ENCODE measurements at regions of chr4 and their contacts with region 1.

Region 1: DNA sequence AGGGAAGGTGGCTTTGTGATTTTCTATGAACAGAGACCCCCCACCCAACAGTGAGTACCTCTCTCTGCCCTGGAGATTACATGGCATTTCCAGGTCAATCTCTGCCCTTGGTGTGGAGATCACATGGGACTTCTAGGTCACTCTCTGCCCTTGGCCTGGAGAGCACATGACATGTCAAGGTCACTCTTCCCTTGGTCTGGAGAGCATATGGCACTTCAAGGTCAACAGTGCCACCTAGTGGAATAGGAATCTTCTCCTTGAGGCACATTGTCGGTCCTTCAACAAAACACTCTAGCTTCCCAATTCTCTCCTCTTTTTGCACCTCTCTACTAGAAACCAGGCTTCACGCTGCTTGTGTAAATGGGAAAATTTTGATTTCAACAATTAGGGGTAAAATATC is 66.2 kb upstream of the TACR3 start:
- DNase-seq: peak; percentile 17
- ATAC-seq: peak; percentile 96
- H3K4me3 ChIP-seq: no peak overlapping the region
- H3K27ac ChIP-seq: no peak overlapping the region
- H3K4me1 ChIP-seq: no peaks in the 10 kb centered on the region
- H3K27me3 ChIP-seq: no peaks in the 10 kb centered on the region; a peak in 1 of 4 replicates
- CTCF ChIP-seq: peak; percentile 54 to 68 (median 62); a peak in 5 of 6 replicates
- EP300 ChIP-seq: no peak
- POLR2A ChIP-seq: no peak
- RAD21 ChIP-seq: peak; percentile 87

Region 2: DNA sequence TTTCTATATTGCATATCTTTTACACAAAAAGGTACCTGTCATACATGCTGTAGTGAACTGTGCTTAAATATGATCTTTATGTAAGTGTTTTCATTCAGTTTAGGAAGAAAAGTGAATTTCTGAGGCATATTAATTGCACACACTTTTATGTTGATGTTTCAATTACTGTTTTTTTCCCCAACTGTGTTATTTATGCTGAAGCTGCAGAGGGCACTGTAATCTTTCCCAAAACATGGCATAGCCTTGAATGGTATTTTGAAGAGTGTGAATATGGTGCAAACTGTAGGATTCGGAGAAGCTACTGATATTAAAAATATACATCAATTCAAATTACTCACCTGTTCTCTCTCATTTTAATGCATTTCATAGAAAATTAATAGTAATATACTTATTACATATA is 581.9 kb before region 1 on chr4:
- CTCF ChIA-PET with region 1: interaction called, 5 read pairs
- POLR2A ChIA-PET with region 1: no interaction called
- RAD21 ChIA-PET with region 1: no interaction called
- SMC1A ChIA-PET with region 1: interaction called, 3 read pairs
- in situ Hi-C with region 1: no loop called
- intact Hi-C with region 1: loop called (anchors 1 kb)
- DNase-seq: no peak
- ATAC-seq: 0 out of 3 replicates have a peak, but pooled peaks have one; percentile 21
- H3K4me3 ChIP-seq: no peak overlapping the region
- H3K27ac ChIP-seq: no peak overlapping the region
- H3K4me1 ChIP-seq: no peaks in the 10 kb centered on the region
- H3K27me3 ChIP-seq: no peaks in the 10 kb centered on the region
- CTCF ChIP-seq: peak; percentile 6 to 41 (median 18); a peak in 3 of 6 replicates
- EP300 ChIP-seq: no peak
- POLR2A ChIP-seq: no peak
- RAD21 ChIP-seq: peak; percentile 45

Region 3: DNA sequence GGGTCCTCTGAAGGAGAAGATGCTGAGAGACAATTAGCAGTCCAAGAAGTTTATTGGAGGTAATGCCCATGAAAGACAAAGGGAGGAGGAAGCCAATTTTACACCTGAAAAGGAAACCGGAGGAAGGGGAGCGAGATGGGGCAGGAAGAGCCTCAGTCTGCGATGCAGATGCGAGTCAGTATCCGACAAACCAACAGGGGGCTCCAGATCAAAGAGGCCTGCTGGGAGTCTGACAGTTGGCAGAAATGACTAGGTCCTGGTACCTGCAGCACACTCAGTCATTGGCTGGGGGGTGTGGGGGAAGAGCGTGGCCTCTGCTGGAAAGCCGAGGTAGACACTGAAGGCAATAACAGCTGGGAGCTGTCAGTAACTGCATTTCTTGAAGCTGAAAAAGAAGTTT is 356.7 kb before region 1 on chr4:
- CTCF ChIA-PET with region 1: no interaction called
- POLR2A ChIA-PET with region 1: no interaction called
- RAD21 ChIA-PET with region 1: no interaction called
- SMC1A ChIA-PET with region 1: no interaction called
- in situ Hi-C with region 1: no loop called
- intact Hi-C with region 1: loop called (anchors 2 kb)
- DNase-seq: no peak
- ATAC-seq: peak; percentile 95
- H3K4me3 ChIP-seq: no peak overlapping the region
- H3K27ac ChIP-seq: no peak overlapping the region
- H3K4me1 ChIP-seq: no peaks in the 10 kb centered on the region
- H3K27me3 ChIP-seq: no peaks in the 10 kb centered on the region
- CTCF ChIP-seq: peak; percentile 25 to 49 (median 31); a peak in 5 of 6 replicates
- EP300 ChIP-seq: no peak
- POLR2A ChIP-seq: no peak
- RAD21 ChIP-seq: 0 out of 2 replicates have a peak, but pooled peaks have one; percentile 30

Region 4: DNA sequence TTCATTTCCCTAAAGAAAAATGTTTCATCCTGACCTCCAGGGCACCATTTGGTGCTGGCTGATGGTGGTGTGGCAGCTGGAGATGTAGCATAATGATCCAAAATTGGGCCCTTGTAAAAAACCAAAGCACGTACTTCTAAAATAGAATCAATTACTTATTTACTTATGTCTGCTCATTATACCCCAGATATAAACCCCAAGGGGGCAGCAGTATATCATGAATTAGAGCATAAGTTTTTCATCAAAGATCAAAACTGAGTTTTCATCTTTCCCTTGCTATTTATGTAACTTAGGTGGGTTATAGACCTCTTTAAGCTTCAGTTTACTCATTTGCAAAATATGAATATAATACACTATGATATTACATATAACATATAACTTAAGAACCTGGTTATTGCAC is 307.3 kb before region 1 on chr4:
- CTCF ChIA-PET with region 1: no interaction called
- POLR2A ChIA-PET with region 1: no interaction called
- RAD21 ChIA-PET with region 1: no interaction called
- SMC1A ChIA-PET with region 1: no interaction called
- in situ Hi-C with region 1: no loop called
- intact Hi-C with region 1: loop called (anchors 5 kb)
- DNase-seq: no peak
- ATAC-seq: no peak
- H3K4me3 ChIP-seq: no peak overlapping the region
- H3K27ac ChIP-seq: no peak overlapping the region
- H3K4me1 ChIP-seq: no peaks in the 10 kb centered on the region
- H3K27me3 ChIP-seq: no peaks in the 10 kb centered on the region
- CTCF ChIP-seq: peak in 1 of 3 experiments; percentile 31; a peak in 2 of 6 replicates
- EP300 ChIP-seq: no peak
- POLR2A ChIP-seq: no peak
- RAD21 ChIP-seq: peak; percentile 65

Region 5: DNA sequence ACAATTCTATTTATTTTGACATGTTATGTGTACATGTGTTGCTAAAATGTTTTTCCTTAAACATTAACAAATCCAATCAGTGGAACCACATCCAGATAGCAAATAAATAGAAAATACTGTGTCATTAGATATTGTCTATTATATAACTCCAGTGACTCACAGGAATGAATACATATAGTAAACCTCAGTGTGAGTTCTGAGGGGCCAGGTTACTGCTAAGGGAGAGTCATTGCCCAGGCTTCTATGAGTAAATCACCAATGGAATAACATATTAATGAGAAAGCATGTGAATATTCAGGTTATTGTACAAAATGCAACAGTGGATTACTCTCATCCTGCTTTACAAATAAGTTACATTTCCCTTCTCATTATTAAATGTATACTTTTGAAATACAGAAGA is 93.4 kb before region 1 on chr4:
- CTCF ChIA-PET with region 1: no interaction called
- POLR2A ChIA-PET with region 1: no interaction called
- RAD21 ChIA-PET with region 1: no interaction called
- SMC1A ChIA-PET with region 1: no interaction called
- in situ Hi-C with region 1: no loop called
- intact Hi-C with region 1: no loop called
- DNase-seq: no peak
- ATAC-seq: no peak
- H3K4me3 ChIP-seq: no peak overlapping the region
- H3K27ac ChIP-seq: no peak overlapping the region
- H3K4me1 ChIP-seq: no peaks in the 10 kb centered on the region
- H3K27me3 ChIP-seq: no peaks in the 10 kb centered on the region
- CTCF ChIP-seq: no peak
- EP300 ChIP-seq: no peak
- POLR2A ChIP-seq: no peak
- RAD21 ChIP-seq: no peak

Measured in GM12878 (cell line).